ENCODE measurements at regions of chr12 and their contacts with region 1.

Region 1: DNA sequence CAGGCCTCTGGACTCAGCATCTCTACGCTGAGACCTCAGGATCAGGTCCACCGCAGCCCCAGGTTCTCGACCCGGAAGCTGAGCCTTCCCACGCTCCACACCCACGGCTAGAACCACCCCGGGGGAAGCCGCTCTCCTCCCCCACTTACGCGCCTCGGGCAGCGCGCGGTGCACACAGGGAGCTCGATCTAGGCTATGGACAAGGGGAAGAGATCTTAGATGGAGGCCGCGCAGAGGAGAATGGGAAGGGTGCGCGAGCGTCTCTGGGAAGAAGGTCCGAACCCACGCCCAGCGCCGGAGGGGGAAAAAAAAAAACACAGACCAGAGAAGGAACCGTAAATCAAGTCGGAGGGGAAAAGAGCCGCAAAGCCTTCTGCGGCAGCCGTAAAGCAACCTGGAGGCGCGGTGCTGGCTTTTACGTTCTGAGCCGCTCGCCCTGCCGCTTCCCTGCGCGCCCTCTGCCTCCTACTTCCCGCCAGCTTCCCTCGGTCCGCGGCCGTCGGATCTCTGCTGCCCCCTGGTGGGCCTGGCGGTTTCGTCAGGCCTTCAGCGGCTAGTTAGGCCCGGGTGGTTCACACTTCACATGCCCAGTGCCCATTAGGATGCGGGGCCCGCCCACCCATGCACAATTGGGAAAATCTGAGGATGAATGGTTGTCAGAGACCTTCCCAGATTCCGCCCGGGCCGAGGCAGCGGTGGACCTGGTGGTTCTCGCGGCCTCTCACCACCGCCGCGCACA is at the start of gene RAD52:
- H3K4me3 ChIP-seq: peak within 1 kb of the TSS; percentile 92
- H3K27ac ChIP-seq: peak within 1 kb of the TSS; percentile 91
- H3K4me1 ChIP-seq: no peaks in the 10 kb centered on the region; the same call in 1 of the 2 replicates
- CTCF ChIP-seq: peak; percentile 99

Region 2: GRCh38 chr12:990661-991349 is 41.2 kb after region 1 on chr12 and contains the start of gene ERC1:
- CTCF ChIA-PET with region 1: interaction called, 4 read pairs
- POLR2A ChIA-PET with region 1: interaction called, 19 read pairs
- H3K4me3 ChIP-seq: peak within 1 kb of the TSS; percentile 96
- H3K27ac ChIP-seq: peak within 1 kb of the TSS; percentile 96
- H3K4me1 ChIP-seq: peaks cover 16% of the 10 kb centered on the region; the same call in 1 of the 2 replicates
- CTCF ChIP-seq: peak; percentile 97